Gastrocnemius medialis (tissue), 4 donors: ENCODE measurements at regions of chr7 and their contacts with region 1.

Region 1: GRCh38 chr7:101542527-101543241 is 86.4 kb downstream of the MYL10 start:
- DNase-seq: peak; percentile 11 to 42
- ATAC-seq: peak; percentile 58 to 67
- H3K4me3 ChIP-seq: no peak overlapping the region
- H3K27ac ChIP-seq: no peak overlapping the region
- H3K4me1 ChIP-seq: no peaks in the 10 kb centered on the region
- H3K27me3 ChIP-seq: no peaks in the 10 kb centered on the region
- CTCF ChIP-seq: peak; percentile 79 to 94 (median 89)
- POLR2A ChIP-seq: no peak

Region 2: DNA sequence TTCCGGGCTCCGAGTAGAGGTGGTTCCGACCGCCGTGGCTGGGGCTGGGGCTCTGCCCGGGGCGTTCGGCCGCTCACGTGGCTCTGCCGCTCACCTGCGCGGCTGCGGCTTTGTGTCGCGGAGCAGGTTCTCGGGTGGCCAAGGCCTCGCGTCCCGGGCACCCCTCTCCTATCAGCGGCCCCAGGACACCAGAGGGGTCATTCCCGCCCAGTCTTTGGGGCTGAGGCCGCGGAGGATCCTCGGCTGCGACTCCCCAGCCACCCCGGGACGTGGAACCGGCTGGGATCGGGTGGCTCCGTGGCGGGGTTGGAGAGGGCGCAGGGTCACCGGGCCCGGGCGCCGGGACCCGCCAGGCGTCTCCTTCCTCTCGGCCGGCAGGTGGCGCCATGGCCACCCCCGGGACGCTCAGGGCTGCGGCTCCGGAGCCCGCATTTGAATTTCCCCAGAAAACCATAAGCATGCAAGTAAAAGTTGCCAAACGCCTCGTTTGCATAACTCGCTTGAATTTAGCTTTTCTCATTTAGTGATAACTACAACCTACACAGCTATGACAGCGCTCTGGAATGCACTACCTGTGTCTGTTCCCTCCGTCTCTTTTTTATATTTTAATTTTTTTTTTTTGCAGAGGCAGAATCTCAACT is 178.8 kb before region 1 on chr7:
- in situ Hi-C with region 1: loop called in 1 of 4 experiments (anchors 25 kb)
- intact Hi-C with region 1: loop called (anchors 5 kb)
- DNase-seq: peak; percentile 14 to 18
- ATAC-seq: peak in 1 of 2 donors; percentile 86
- H3K4me3 ChIP-seq: peak overlapping the region; percentile 45 to 81 (median 58)
- H3K27ac ChIP-seq: no peak overlapping the region
- H3K4me1 ChIP-seq: peaks cover 4 to 7% of the 10 kb centered on the region in 2 donors
- H3K27me3 ChIP-seq: peaks cover 6 to 30% (median 30%) of the 10 kb centered on the region in 3 donors
- CTCF ChIP-seq: peak; percentile 57 to 88 (median 76)
- POLR2A ChIP-seq: no peak

Region 3: DNA sequence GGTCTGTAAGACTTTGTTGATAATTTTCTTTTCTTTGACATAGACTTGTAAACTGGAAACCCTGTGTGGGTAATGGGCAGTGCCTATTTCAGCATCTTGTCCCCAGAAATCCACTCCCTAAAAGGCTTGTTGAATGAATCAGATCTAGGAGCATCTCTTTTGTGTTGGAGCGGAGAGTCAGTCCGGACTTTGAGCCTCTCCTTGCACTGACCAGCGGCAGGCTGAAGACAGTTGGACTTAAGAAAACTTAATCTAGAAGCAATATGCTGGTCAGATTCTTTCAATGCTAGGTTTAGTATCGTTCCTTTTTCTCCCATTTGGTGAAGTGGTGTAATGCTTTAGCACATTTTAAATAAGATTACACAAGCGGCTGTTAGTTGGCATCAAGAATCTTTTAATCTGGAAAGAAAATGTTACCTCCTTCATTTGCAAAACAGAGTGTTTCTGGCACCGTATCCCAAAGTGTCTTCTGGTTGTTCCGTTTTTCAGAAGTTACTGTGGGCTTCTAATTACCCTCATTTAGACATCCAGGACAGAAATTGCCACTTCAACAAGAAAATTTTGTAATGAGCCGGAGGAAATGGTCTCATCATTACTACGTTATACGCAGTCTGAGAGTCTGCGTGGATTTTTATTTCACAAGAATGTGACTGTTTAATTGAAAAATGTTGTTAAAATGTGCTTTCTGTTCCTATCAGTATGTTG is 349.4 kb after region 1 on chr7:
- in situ Hi-C with region 1: no loop called
- intact Hi-C with region 1: no loop called
- DNase-seq: no peak
- ATAC-seq: no peak
- H3K4me3 ChIP-seq: no peak overlapping the region
- H3K27ac ChIP-seq: peak overlapping the region; percentile 25 to 65 (median 38)
- H3K4me1 ChIP-seq: peaks cover 44 to 48% of the 10 kb centered on the region in 2 donors
- H3K27me3 ChIP-seq: no peaks in the 10 kb centered on the region
- CTCF ChIP-seq: no peak
- POLR2A ChIP-seq: no peak

Region 4: GRCh38 chr7:102272075-102272917 is 729.6 kb after region 1 on chr7:
- in situ Hi-C with region 1: loop called (anchors 5 kb)
- intact Hi-C with region 1: loop called (anchors 1 kb)
- DNase-seq: peak; percentile 52 to 71
- ATAC-seq: peak; percentile 81 to 91
- H3K4me3 ChIP-seq: no peak overlapping the region
- H3K27ac ChIP-seq: no peak overlapping the region
- H3K4me1 ChIP-seq: no peaks in the 10 kb centered on the region
- H3K27me3 ChIP-seq: no peaks in the 10 kb centered on the region
- CTCF ChIP-seq: peak; percentile 86 to 95 (median 93)
- POLR2A ChIP-seq: no peak

Region 5: DNA sequence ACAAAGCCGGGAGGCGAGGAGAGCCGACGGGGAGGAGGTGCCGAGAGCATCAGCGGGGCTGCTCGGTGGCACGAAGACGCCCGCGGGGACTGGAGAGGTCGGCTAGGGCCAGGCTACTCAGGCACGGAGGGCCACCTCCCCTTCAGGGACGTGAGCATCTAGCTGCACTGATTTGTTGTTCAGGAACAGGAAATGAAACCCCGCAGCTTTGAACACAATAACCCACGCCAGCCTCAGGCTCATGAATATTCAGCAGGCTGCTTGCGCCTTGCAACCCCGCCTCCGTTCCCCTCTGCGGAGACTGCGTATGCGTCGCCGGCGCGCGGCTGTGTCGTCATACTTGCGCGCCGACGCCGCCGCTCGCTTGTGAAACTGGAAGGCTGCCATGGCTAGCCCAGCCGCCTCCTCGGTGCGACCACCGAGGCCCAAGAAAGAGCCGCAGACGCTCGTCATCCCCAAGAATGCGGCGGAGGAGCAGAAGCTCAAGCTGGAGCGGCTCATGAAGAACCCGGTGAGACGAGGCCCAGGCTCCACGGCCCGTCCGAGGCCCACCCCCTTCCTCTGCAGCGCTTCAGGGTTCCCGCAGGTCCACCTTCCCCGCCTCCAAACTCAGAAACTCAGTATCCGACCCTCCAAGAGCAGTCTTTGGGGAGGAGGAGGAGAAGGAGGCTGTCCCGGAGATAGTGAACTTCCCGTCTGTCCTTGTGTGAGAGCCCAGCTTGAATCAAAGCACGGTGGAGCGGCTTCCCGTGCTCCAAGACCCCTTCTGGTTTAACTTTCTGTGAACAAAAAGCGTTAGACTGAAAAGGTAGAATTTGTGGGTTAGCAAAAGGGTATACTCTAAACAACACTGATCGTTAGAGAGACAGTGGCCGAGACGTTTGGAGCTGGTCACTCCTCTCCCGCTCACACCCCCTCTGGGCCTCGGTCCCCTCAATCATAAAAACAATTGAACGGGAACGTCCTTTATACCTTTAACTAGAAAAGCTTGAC is 853.6 kb after region 1 on chr7 and contains the start of gene PRKRIP1:
- in situ Hi-C with region 1: loop called in 3 of 4 experiments (anchors 25 kb)
- intact Hi-C with region 1: no loop called
- DNase-seq: peak; percentile 65 to 85
- ATAC-seq: peak; percentile 87 to 93
- H3K4me3 ChIP-seq: peak within 1 kb of the TSS; percentile 70 to 97 (median 94)
- H3K27ac ChIP-seq: peak within 1 kb of the TSS; percentile 82 to 90 (median 86)
- H3K4me1 ChIP-seq: peaks cover 7 to 13% of the 10 kb centered on the region in 2 donors
- H3K27me3 ChIP-seq: no peaks in the 10 kb centered on the region
- CTCF ChIP-seq: no peak
- POLR2A ChIP-seq: peak; percentile 20 to 58
- total RNA-seq, gene PRKRIP1: 6.1 to 22.1 (median 13.4) TPM